ENCODE measurements at regions of chr11 and their contacts with region 1.

Region 1: DNA sequence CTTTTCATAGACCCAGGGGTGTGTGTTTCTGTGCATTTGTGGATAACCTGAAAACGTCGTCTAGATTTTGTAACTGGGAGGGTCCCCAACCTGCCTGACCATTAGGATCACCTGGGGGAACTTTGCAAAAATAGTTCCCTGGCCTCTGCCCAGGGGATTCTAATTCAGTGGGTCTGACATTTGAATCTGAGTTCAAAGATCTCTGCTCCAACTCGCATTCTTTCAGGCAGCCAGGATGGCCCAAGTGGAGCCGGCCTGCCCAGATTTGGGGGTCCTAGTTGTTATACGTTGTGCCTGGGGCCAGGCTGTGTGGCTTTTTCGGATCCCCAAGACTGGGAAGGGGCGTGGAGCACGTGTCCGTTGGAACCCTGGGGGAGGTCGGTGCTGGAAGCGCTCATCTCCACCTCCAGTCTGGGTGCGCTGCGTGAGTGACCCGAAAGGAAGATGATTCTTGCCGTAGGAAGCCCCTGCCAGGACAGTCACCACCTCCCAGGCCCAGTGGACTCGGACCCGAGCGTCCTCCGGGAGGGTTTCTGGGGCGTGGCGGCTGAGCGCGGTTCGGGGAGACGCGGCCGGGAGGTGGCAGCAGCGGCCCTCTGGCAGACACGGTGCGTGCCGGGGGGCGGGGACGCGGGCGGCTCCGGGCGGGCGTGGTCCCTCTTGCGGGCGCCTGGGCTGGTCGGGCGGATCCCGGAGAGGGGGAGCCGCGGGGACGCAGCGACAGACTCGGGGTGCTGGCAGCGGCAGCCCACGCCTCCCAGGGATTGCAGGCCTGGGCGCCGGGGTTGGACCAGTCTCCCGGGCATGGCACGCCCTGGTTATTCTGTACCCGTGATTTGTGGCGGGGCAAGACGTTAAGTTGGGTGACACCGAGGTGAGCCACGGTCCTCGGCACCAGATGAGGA is 29.2 kb upstream of the PLET1 start:
- DNase-seq: peak; percentile 89
- H3K4me3 Mint-ChIP-seq: peak overlapping the region; percentile 63
- H3K27ac Mint-ChIP-seq: peak overlapping the region; percentile 56
- H3K4me1 Mint-ChIP-seq: peaks cover 36% of the 10 kb centered on the region
- H3K27me3 Mint-ChIP-seq: peaks cover 6% of the 10 kb centered on the region

Region 2: DNA sequence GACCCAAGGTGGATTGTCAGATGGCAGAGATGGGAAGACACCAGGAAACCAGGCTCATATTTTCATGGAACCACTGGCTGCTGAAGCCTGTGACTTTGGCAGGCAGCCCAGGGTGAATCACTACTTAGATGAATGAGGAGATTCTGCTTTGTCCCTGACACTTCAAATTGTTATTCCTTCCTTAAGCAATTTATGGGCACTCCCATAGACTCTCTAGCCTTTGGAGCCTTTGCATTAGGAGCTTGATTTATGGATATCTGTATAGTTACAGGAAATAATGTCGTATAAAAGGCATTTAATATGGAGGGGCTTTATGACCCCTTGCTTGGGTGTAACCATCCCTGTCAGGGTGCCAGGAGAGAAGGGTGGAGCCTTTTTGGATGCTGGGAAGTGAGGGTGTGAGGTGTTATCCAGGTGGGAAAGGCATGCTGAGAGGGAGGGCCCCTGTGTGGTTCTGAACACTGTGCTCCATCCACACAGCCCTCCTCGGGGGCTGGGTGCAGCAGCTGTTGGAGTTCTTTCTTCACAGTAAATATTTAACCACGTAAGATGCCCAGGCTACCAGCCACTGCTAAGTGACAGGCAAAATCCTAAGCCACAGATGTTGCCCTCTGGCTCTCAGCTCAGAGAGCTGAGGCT is 161.2 kb before region 1 on chr11:
- CTCF ChIA-PET with region 1: no interaction called
- DNase-seq: no peak
- H3K4me3 Mint-ChIP-seq: no peak overlapping the region
- H3K27ac Mint-ChIP-seq: no peak overlapping the region
- H3K4me1 Mint-ChIP-seq: peaks cover 4% of the 10 kb centered on the region
- H3K27me3 Mint-ChIP-seq: no peaks in the 10 kb centered on the region

Region 3: DNA sequence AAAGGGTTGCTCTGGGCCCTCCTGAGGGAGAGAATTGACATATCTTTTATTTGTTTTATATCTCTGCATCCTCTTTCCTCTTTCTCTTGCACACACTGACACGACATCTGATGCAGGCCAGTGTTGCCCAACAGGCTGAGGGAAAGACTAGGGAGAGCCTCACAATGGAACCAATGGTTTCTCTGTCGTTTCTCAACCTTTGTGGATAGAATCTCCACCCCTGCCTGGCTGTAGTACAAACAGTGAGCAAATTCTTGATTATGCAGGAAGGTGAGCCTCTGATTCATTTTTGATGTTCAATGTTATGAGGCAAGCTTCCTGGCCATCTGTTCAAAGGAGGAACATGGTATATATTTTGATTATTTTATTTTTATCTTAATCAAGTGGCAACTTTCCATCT is 20.6 kb after region 1 on chr11:
- CTCF ChIA-PET with region 1: no interaction called
- DNase-seq: no peak
- H3K4me3 Mint-ChIP-seq: no peak overlapping the region
- H3K27ac Mint-ChIP-seq: no peak overlapping the region
- H3K4me1 Mint-ChIP-seq: peaks cover 2% of the 10 kb centered on the region
- H3K27me3 Mint-ChIP-seq: no peaks in the 10 kb centered on the region

Region 4: GRCh38 chr11:112453601-112454577 is 164.0 kb after region 1 on chr11:
- CTCF ChIA-PET with region 1: interaction called, 17 read pairs
- DNase-seq: peak; percentile 56
- H3K4me3 Mint-ChIP-seq: no peak overlapping the region
- H3K27ac Mint-ChIP-seq: no peak overlapping the region
- H3K4me1 Mint-ChIP-seq: peaks cover 7% of the 10 kb centered on the region
- H3K27me3 Mint-ChIP-seq: no peaks in the 10 kb centered on the region

Measured in activated naive CD4-positive, alpha-beta T cell treated with anti-CD3 and anti-CD28 coated beads, Interleukin-2, amount 10 ng/mL, durations not matched to agents 7 days and 5 days (primary cell).